A549 (cell line): ENCODE measurements at regions of chr9 and their contacts with region 1.

Region 1: GRCh38 chr9:129495534-129496325 is 125.2 kb downstream of the C9orf50 start:
- DNase-seq: peak; percentile 95 to 97
- ATAC-seq: peak; percentile 63 to 76
- H3K4me3 ChIP-seq: peak overlapping the region; percentile 63
- H3K27ac ChIP-seq: peak overlapping the region; percentile 99 to 100
- H3K4me1 ChIP-seq: peaks cover 86% of the 10 kb centered on the region
- CTCF ChIP-seq: no peak
- EP300 ChIP-seq: peak; percentile 27 to 42; a peak in 1 of 5 replicates
- POLR2A ChIP-seq: no peak; the same call in 1 of the 2 replicates
- RAD21 ChIP-seq: peak; percentile 14 to 50; a peak in 3 of 5 replicates

Region 2: DNA sequence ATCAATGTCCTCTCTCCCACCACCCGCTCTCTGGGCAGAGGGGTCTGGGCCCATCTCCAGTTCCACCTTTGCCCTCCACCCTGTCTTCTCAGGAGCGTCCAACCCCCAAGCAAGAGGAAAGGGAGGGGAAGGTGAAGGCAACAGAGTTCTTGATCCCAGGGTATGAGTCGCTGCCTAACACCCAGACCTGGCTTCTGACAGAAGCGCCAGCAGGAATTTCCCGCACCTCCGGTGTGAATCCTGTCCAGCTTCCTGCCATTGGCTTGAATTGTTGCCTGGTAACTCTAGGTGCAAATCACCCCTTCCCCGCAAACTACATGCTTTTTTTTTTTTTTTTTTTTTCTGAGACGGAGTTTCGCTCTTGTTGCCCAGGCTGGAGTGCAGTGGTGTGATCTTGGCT is 233.5 kb before region 1 on chr9:
- CTCF ChIA-PET with region 1: no interaction called
- POLR2A ChIA-PET with region 1: no interaction called
- DNase-seq: no peak
- ATAC-seq: no peak
- H3K4me3 ChIP-seq: no peak overlapping the region
- H3K27ac ChIP-seq: peak overlapping the region in 1 of 2 experiments; percentile 38; a peak in 2 of 6 replicates
- H3K4me1 ChIP-seq: peaks cover 12% of the 10 kb centered on the region
- CTCF ChIP-seq: no peak
- EP300 ChIP-seq: no peak
- POLR2A ChIP-seq: no peak
- RAD21 ChIP-seq: no peak

Region 3: GRCh38 chr9:129333953-129334724 is 161.6 kb before region 1 on chr9:
- CTCF ChIA-PET with region 1: no interaction called
- POLR2A ChIA-PET with region 1: interaction called, 14 read pairs
- DNase-seq: peak; percentile 95 to 99
- ATAC-seq: peak; percentile 93 to 94
- H3K4me3 ChIP-seq: peak overlapping the region; percentile 7; the same call in 1 of the 3 replicates
- H3K27ac ChIP-seq: peak overlapping the region; percentile 99 to 100
- H3K4me1 ChIP-seq: peaks cover 58% of the 10 kb centered on the region
- CTCF ChIP-seq: peak; percentile 13; the same call in 1 of the 3 replicates
- EP300 ChIP-seq: peak; percentile 95 to 98
- POLR2A ChIP-seq: peak; percentile 4; the same call in 1 of the 2 replicates
- RAD21 ChIP-seq: peak; percentile 25 to 78; a peak in 4 of 5 replicates

Region 4: GRCh38 chr9:129453760-129454159 is 42.0 kb before region 1 on chr9:
- CTCF ChIA-PET with region 1: no interaction called
- POLR2A ChIA-PET with region 1: no interaction called
- DNase-seq: no peak
- ATAC-seq: no peak
- H3K4me3 ChIP-seq: no peak overlapping the region
- H3K27ac ChIP-seq: 0 out of 6 replicates have a peak overlapping the region, but pooled peaks of 1 of the 2 experiments have one; percentile 12
- H3K4me1 ChIP-seq: peaks cover 16% of the 10 kb centered on the region
- CTCF ChIP-seq: no peak
- EP300 ChIP-seq: no peak
- POLR2A ChIP-seq: no peak
- RAD21 ChIP-seq: no peak

Region 5: GRCh38 chr9:129482521-129483414 is 13.0 kb before region 1 on chr9:
- CTCF ChIA-PET with region 1: interaction called, 28 read pairs
- POLR2A ChIA-PET with region 1: interaction called, 63 read pairs
- DNase-seq: peak in 1 of 2 experiments; percentile 86
- ATAC-seq: peak; percentile 47 to 64
- H3K4me3 ChIP-seq: peak overlapping the region; percentile 47
- H3K27ac ChIP-seq: peak overlapping the region; percentile 99 to 100
- H3K4me1 ChIP-seq: peaks cover 90% of the 10 kb centered on the region
- CTCF ChIP-seq: no peak; the same call in 2 of the 3 replicates
- EP300 ChIP-seq: peak; percentile 71 to 93; a peak in 4 of 5 replicates
- POLR2A ChIP-seq: peak; percentile 29; the same call in 1 of the 2 replicates
- RAD21 ChIP-seq: peak in 1 of 2 experiments; percentile 43; a peak in 2 of 5 replicates

Region 6: GRCh38 chr9:129550199-129550839 is 54.6 kb after region 1 on chr9:
- CTCF ChIA-PET with region 1: interaction called, 4 read pairs
- POLR2A ChIA-PET with region 1: interaction called, 23 read pairs
- DNase-seq: peak; percentile 28 to 55
- ATAC-seq: peak; percentile 74 to 82
- H3K4me3 ChIP-seq: peak overlapping the region; percentile 60
- H3K27ac ChIP-seq: peak overlapping the region; percentile 98
- H3K4me1 ChIP-seq: peaks cover 49% of the 10 kb centered on the region
- CTCF ChIP-seq: no peak
- EP300 ChIP-seq: no peak
- POLR2A ChIP-seq: peak; percentile 27; the same call in 1 of the 2 replicates
- RAD21 ChIP-seq: 0 out of 5 replicates have a peak, but pooled peaks of 1 of the 2 experiments have one; percentile 18

Region 7: DNA sequence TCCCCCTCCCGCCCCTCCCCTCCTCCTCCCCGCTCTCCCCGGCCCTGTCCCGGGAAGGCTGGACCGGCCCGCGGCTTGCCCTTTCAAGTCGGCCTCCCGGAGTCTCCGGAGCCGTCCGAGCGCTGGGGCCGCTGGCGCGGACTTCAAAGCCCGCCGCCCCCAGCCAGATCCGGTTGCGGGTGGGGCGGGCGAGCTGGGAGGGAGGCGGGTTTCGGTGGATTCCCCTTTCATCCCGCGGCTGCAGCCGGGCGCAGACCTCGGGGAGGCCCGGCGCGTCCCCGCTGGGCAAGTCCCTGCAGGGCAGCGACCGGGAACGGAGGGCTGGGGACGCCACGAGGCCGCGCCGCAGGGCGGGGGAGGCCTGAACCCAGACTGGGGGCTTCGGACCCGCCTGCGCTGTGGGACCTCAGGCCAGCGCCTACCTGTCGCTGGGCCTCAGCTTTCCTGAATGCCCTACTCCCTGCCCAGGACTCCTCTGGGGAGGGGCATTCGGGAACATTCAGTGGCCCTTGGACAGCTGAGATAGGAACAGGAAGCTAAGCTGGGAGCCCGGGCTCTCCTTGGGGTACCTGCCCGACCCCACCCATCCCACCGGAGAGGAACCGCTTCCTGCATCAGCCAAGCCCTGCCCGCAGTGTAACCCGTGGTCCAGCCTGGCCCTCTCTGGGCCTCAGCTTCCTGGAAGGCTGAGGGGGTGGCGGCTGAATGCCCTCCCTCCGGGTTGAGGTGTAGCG is 101.8 kb after region 1 on chr9:
- CTCF ChIA-PET with region 1: interaction called, 7 read pairs
- POLR2A ChIA-PET with region 1: interaction called, 10 read pairs
- DNase-seq: peak; percentile 61 to 78
- ATAC-seq: peak; percentile 73 to 75
- H3K4me3 ChIP-seq: peak overlapping the region; percentile 40
- H3K27ac ChIP-seq: peak overlapping the region; percentile 99 to 100
- H3K4me1 ChIP-seq: peaks cover 57% of the 10 kb centered on the region
- CTCF ChIP-seq: no peak
- EP300 ChIP-seq: peak; percentile 75 to 88; a peak in 3 of 5 replicates
- POLR2A ChIP-seq: peak; percentile 28
- RAD21 ChIP-seq: peak in 1 of 2 experiments; percentile 30; a peak in 1 of 5 replicates